Gastrocnemius medialis (tissue), 4 donors: ENCODE measurements at regions of chr16 and their contacts with region 1.

Region 1: GRCh38 chr16:21184834-21185233 is 26.4 kb downstream of the LDAF1 start:
- DNase-seq: no peak
- ATAC-seq: no peak
- H3K4me3 ChIP-seq: no peak overlapping the region
- H3K27ac ChIP-seq: no peak overlapping the region
- H3K4me1 ChIP-seq: no peaks in the 10 kb centered on the region
- H3K27me3 ChIP-seq: no peaks in the 10 kb centered on the region
- CTCF ChIP-seq: no peak
- POLR2A ChIP-seq: no peak

Region 2: GRCh38 chr16:21300309-21301167 is 115.7 kb after region 1 on chr16:
- in situ Hi-C with region 1: loop called in 2 of 4 experiments (anchors 5 to 25 kb)
- intact Hi-C with region 1: loop called (anchors 1 kb)
- DNase-seq: peak; percentile 91 to 92
- ATAC-seq: peak; percentile 99 to 100
- H3K4me3 ChIP-seq: peak overlapping the region; percentile 63 to 72 (median 66)
- H3K27ac ChIP-seq: peak overlapping the region; percentile 48 to 70 (median 66)
- H3K4me1 ChIP-seq: no peaks in the 10 kb centered on the region
- H3K27me3 ChIP-seq: peaks cover 0 to 5% (median 0%) of the 10 kb centered on the region in 3 donors
- CTCF ChIP-seq: peak; percentile 53 to 80 (median 72)
- POLR2A ChIP-seq: peak; percentile 10 to 34